ENCODE measurements at regions of chr11 and their contacts with region 1.

Region 1: GRCh38 chr11:73184953-73185671 is 33.0 kb upstream of the P2RY2 start:
- DNase-seq: peak; percentile 79
- ATAC-seq: peak; percentile 83

Region 2: GRCh38 chr11:73028611-73029010 is 156.5 kb before region 1 on chr11:
- intact Hi-C with region 1: no loop called
- DNase-seq: no peak
- ATAC-seq: no peak

Region 3: DNA sequence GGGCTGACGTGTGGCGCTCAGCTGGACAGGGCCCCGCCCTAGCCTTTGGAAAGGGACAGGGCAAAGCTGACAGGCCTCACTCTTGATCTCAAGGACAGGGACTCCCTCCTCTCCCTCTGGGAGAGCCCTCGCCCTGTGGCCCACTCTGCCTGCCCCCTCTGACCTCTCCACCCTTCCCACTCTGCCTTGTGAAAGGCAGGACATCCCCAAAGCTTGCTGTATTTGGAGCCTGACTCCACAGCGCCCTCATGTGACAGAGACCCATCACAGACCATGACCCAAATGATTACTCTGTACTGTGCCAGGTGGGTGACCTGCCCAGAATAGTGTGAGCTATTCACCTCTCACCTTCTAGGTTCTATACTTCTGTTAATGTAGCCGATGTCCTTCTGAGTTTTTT is 51.7 kb after region 1 on chr11:
- intact Hi-C with region 1: loop called (anchors 5 kb)
- DNase-seq: no peak
- ATAC-seq: peak; percentile 29